ENCODE measurements at regions of chr1 and their contacts with region 1.

Region 1: GRCh38 chr1:159936273-159936904 is 9.0 kb downstream of the IGSF9 start:
- DNase-seq: peak; percentile 85
- ATAC-seq: peak; percentile 89
- H3K4me3 ChIP-seq: peak overlapping the region in 1 of 5 experiments; percentile 17
- H3K4me3 Mint-ChIP-seq: peak overlapping the region; percentile 49
- H3K27ac ChIP-seq: no peak overlapping the region
- H3K27ac Mint-ChIP-seq: peak overlapping the region; percentile 61
- H3K4me1 ChIP-seq: peaks cover 37 to 43% of the 10 kb centered on the region in 2 donors
- H3K4me1 Mint-ChIP-seq: peaks cover 47% of the 10 kb centered on the region
- H3K27me3 ChIP-seq: no peaks in the 10 kb centered on the region
- H3K27me3 Mint-ChIP-seq: peaks cover 4% of the 10 kb centered on the region
- CTCF ChIP-seq: peak; percentile 96

Region 2: DNA sequence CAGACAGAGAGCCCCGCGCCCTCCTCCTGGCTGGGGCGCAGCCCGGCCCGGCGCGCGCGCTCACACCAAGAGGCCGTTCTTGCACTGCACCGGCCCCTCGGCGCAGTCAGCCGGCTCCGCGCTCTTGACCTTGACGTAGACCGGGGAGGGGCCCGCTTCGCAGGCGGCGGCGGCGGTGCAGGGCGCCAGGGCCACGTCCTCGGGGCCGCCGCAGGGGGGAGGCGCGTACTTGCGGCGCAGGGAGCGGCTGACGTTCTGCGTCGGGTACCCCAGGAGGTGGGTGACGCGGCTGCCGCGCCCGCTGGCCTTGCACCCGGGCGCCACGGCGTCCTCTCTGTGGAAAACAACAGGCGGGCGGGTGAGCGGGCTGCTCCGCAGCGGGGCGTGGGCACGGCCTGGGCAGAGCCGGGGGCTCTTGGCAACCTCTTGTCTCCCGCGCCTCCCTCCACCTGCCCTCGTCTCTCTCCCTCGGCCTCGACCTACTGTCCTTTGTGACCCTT is 81.6 kb before region 1 on chr1:
- CTCF ChIA-PET with region 1: no interaction called
- POLR2A ChIA-PET with region 1: no interaction called
- intact Hi-C with region 1: loop called (anchors 5 kb)
- DNase-seq: peak; percentile 75
- ATAC-seq: peak; percentile 93
- H3K4me3 ChIP-seq: peak overlapping the region in 4 of 5 experiments; percentile 38 to 64 (median 56)
- H3K4me3 Mint-ChIP-seq: peak overlapping the region; percentile 70
- H3K27ac ChIP-seq: peak overlapping the region in 1 of 2 donors; percentile 20
- H3K27ac Mint-ChIP-seq: no peak overlapping the region
- H3K4me1 ChIP-seq: peaks cover 5 to 13% of the 10 kb centered on the region in 2 donors
- H3K4me1 Mint-ChIP-seq: peaks cover 12% of the 10 kb centered on the region
- H3K27me3 ChIP-seq: peaks cover 0 to 21% (median 2%) of the 10 kb centered on the region in 4 experiments
- H3K27me3 Mint-ChIP-seq: peaks cover 4% of the 10 kb centered on the region
- CTCF ChIP-seq: no peak

Region 3: GRCh38 chr1:159867683-159868064 is 68.7 kb before region 1 on chr1:
- CTCF ChIA-PET with region 1: no interaction called
- POLR2A ChIA-PET with region 1: no interaction called
- intact Hi-C with region 1: no loop called
- DNase-seq: no peak
- ATAC-seq: no peak
- H3K4me3 ChIP-seq: no peak overlapping the region
- H3K4me3 Mint-ChIP-seq: no peak overlapping the region
- H3K27ac ChIP-seq: no peak overlapping the region
- H3K27ac Mint-ChIP-seq: no peak overlapping the region
- H3K4me1 ChIP-seq: no peaks in the 10 kb centered on the region
- H3K4me1 Mint-ChIP-seq: no peaks in the 10 kb centered on the region
- H3K27me3 ChIP-seq: no peaks in the 10 kb centered on the region
- H3K27me3 Mint-ChIP-seq: peaks cover 34% of the 10 kb centered on the region
- CTCF ChIP-seq: no peak

Region 4: DNA sequence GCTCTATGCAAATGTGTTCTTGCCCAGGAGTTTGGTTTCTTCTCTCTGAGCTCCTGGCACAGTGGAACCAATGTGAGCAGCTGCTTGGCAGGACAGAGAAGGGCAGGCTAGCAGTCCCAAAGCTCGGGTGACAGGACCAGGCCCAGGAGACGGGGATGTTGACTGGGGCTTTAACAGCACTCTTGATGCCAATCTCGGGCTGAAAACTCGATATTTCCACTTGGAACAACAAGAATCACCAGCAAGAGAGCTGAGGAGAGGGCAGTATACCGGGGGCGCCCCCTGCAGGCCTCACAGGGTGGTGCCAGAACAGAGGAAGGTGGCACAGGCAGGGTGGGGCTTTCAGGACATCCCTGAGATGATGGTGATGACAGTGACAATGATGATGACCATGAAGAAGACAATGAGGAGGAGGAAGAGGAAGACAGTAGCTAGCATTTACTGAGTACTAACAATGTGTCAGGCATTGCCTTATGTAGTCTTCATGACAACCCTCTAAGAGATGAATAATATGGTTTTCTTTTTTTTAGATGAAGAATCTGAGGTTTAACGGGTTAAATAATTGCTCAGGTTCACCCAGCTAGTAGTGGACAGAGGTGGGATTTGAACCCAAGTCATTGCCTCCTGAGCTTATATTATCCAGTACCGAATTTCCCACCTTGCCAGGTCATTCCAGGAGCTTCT is 142.3 kb after region 1 on chr1:
- CTCF ChIA-PET with region 1: interaction called, 6 read pairs
- POLR2A ChIA-PET with region 1: no interaction called
- intact Hi-C with region 1: loop called (anchors 5 kb)
- DNase-seq: peak; percentile 66
- ATAC-seq: peak; percentile 70
- H3K4me3 ChIP-seq: no peak overlapping the region
- H3K4me3 Mint-ChIP-seq: no peak overlapping the region
- H3K27ac ChIP-seq: no peak overlapping the region
- H3K27ac Mint-ChIP-seq: no peak overlapping the region
- H3K4me1 ChIP-seq: peaks cover 0 to 4% of the 10 kb centered on the region in 2 donors
- H3K4me1 Mint-ChIP-seq: peaks cover 2% of the 10 kb centered on the region
- H3K27me3 ChIP-seq: peaks cover 0 to 51% (median 35%) of the 10 kb centered on the region in 4 experiments
- H3K27me3 Mint-ChIP-seq: peaks cover 54% of the 10 kb centered on the region
- CTCF ChIP-seq: peak; percentile 83

Region 5: DNA sequence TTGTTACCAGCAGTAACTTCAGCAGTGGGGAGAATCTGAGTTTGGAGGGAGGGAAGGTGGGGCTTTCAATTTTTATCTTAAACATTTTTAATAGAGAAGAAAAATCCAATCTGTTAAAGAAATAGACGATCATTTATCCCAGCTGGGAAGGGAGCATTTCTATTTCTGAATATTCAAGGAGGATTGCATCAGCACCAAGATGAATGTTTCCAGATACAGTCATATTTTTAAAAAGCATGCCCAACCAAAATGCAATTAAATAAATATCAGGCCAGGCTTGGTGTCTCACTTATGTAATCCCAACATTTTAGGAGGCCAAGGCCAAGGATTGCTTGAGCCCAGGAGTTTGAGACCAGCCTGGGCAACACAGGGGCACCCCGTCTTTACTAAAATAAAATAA is 213.3 kb after region 1 on chr1:
- CTCF ChIA-PET with region 1: no interaction called
- POLR2A ChIA-PET with region 1: no interaction called
- intact Hi-C with region 1: no loop called
- DNase-seq: no peak
- ATAC-seq: no peak
- H3K4me3 ChIP-seq: no peak overlapping the region
- H3K4me3 Mint-ChIP-seq: no peak overlapping the region
- H3K27ac ChIP-seq: no peak overlapping the region
- H3K27ac Mint-ChIP-seq: no peak overlapping the region
- H3K4me1 ChIP-seq: no peaks in the 10 kb centered on the region
- H3K4me1 Mint-ChIP-seq: no peaks in the 10 kb centered on the region
- H3K27me3 ChIP-seq: no peaks in the 10 kb centered on the region
- H3K27me3 Mint-ChIP-seq: peaks cover 13% of the 10 kb centered on the region
- CTCF ChIP-seq: no peak